Activated CD8-positive, alpha-beta T cell treated with anti-CD3 and anti-CD28 coated beads, Interleukin-2, amount 10 ng/mL, durations not matched to agents 7 days and 5 days (primary cell): ENCODE measurements at regions of chr14 and their contacts with region 1.

Region 1: DNA sequence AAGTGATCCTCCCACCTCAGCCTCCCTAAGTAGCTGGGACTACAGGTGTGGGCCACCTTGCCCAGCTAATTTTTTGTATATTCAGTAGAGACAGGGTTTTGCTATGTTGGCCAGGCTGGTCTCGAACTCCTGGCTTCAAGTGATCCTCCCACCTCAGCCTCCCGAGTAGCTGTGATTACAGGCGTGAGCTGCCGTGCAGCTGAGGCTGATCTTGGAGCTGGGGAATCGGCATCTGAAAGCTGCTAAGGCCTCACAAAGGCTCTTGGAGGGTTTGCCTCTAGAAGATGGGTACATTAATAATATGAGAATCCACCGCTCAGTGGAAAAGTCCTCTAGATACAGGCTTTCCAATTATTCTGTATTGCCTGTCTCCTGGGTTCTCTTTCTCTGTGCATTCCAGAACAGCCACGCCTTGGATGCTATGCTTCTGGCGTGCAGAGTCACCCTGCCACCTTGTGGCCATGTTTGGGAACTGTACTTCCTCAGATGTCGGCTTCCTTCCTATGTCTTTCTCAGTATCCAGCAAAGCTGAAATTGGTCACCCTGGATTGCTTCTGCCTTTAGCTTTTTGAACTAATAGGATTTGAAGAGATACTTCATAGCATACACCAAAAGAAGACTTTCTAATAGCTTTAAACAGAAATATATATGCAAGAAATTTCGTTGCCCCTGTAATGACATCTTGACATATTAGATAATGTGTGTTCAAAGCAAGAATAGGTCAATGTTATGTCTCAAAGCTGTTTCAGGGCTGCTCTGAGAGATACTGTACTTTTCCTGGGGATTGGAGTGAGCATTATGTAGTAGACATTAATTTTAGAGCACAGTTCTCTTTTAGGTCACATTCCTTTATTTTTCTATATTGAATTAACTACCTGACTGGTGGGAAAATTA is 75.4 kb downstream of the SNAPC1 start:
- DNase-seq: peak; percentile 84
- ATAC-seq: peak; percentile 96
- H3K4me3 Mint-ChIP-seq: no peak overlapping the region
- H3K27ac Mint-ChIP-seq: no peak overlapping the region
- H3K4me1 Mint-ChIP-seq: peaks cover 9% of the 10 kb centered on the region
- H3K27me3 Mint-ChIP-seq: peaks cover 25% of the 10 kb centered on the region

Region 2: DNA sequence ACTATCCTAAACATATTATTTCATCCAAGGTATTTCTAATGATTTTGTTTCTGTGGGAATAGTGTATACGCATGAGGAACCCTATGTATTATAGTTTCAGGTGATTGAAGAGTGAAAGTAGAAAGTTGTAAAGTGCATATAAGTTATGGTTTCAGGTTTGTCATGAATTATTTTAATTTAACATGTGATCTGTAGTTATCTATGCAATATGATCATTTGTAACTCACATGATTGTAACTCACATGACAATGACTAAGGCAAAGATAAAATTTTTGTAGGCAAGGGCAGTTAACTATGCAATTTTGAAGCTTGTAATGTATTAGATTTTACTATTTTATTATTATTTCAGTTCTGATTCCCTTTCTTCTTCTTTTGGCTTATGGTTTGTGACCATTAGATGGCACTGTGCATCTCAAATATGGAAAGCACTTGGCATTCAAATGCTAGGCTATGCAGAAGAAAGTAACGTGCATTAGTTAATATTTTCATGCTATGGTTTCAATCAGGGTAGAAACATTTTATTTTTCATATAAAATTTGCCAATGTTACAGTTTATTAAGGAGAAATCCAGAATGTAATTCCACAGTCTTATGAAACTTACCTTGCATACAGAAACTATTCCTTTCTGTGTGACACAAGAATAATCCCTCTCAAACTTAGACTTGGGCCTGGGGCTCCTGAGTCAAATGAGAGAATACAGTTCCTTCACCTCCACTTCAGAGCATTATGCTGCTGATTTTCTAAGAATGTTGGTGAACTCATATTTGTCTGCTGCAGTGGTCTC is 540.7 kb before region 1 on chr14:
- CTCF ChIA-PET with region 1: interaction called, 12 read pairs
- POLR2A ChIA-PET with region 1: no interaction called
- DNase-seq: peak; percentile 50
- ATAC-seq: peak; percentile 50
- H3K4me3 Mint-ChIP-seq: peak overlapping the region; percentile 53
- H3K27ac Mint-ChIP-seq: no peak overlapping the region
- H3K4me1 Mint-ChIP-seq: peaks cover 47% of the 10 kb centered on the region
- H3K27me3 Mint-ChIP-seq: no peaks in the 10 kb centered on the region

Region 3: DNA sequence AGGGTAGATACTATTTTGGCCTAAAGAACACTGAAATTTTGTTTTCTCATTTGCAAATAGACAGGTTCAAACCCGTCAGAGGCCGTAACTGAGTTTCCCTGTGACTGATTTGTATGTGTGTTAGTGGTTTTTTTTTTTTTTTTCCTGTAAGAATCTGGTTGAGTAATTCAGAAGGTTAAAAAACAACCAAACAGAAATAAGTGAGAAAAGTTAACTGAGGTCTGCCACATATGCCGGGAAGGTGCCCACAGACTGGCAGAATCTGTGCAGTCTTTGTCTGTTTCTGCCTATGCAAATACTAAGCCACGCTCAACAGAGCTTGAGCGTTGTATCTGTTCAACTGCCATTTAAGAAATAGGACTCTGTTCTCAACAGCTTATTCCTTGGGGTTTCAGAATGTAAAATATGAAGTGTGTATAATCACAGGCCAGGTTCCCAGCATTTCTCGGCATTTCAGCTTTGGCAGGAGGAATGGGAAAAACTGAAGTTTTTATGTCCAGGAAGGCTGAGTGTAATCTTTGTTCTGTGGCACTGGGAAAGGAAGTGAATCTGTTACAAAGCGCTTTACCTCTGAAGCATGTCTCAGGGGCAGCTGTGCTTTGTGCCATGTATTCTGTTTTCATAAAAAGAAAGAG is 334.3 kb before region 1 on chr14:
- CTCF ChIA-PET with region 1: interaction called, 17 read pairs
- POLR2A ChIA-PET with region 1: no interaction called
- DNase-seq: peak; percentile 66
- ATAC-seq: peak; percentile 82
- H3K4me3 Mint-ChIP-seq: peak overlapping the region; percentile 73
- H3K27ac Mint-ChIP-seq: peak overlapping the region; percentile 97
- H3K4me1 Mint-ChIP-seq: peaks cover 89% of the 10 kb centered on the region
- H3K27me3 Mint-ChIP-seq: no peaks in the 10 kb centered on the region

Region 4: DNA sequence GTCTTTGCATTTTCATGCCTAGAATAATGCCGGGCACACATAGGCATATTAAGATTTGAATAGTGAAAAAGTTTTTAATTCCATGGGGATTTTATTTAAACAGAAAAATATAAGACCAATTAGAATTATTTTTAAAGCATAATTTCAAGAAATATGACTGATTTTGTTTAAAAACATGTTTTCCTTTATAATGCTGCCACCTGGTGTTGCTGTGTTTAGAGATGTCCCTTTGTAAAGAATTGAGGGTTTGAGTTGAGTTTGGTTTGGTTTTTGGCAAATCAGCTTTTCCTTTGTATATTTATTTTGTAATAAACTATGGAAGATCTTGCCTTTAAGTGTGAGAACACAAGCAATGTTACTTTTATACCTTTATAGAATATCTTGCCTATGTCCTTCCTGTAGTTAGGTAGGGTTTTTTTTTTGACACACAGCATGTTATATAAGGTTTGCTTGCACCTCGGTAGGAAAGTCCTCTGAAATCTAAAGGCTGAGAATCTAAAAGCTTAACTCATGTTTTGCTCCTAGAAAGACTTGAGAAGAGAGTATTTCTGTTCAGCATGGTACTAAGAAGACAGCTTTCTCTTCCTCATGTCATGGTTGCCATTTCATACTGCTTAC is 106.7 kb before region 1 on chr14:
- CTCF ChIA-PET with region 1: interaction called, 14 read pairs
- POLR2A ChIA-PET with region 1: no interaction called
- DNase-seq: no peak
- ATAC-seq: no peak
- H3K4me3 Mint-ChIP-seq: no peak overlapping the region
- H3K27ac Mint-ChIP-seq: no peak overlapping the region
- H3K4me1 Mint-ChIP-seq: peaks cover 40% of the 10 kb centered on the region
- H3K27me3 Mint-ChIP-seq: no peaks in the 10 kb centered on the region

Region 5: DNA sequence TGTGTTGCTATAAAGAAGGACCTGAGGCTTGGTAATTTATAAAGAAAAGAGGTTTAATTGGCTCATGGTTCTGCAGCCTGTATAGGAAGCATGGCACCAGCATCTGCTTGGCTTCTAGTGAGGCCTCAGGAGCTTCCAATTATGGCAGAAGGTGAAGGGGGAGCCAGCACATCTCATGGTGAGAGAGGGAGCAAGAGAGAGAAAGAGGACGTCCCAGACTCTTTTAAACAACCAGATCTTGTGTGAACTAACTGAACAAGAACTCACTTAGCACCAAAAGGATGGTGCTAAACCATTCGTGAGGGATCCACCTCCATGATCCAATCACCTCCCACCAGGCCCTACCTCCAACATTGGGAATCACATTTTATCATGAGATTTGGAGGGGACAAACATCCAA is 81.4 kb before region 1 on chr14:
- CTCF ChIA-PET with region 1: interaction called, 62 read pairs
- POLR2A ChIA-PET with region 1: no interaction called
- DNase-seq: no peak
- ATAC-seq: no peak
- H3K4me3 Mint-ChIP-seq: no peak overlapping the region
- H3K27ac Mint-ChIP-seq: no peak overlapping the region
- H3K4me1 Mint-ChIP-seq: peaks cover 24% of the 10 kb centered on the region
- H3K27me3 Mint-ChIP-seq: peaks cover 5% of the 10 kb centered on the region

Region 6: GRCh38 chr14:61803755-61804154 is 33.8 kb before region 1 on chr14:
- CTCF ChIA-PET with region 1: interaction called, 14 read pairs
- POLR2A ChIA-PET with region 1: no interaction called
- DNase-seq: no peak
- ATAC-seq: no peak
- H3K4me3 Mint-ChIP-seq: no peak overlapping the region
- H3K27ac Mint-ChIP-seq: no peak overlapping the region
- H3K4me1 Mint-ChIP-seq: peaks cover 6% of the 10 kb centered on the region
- H3K27me3 Mint-ChIP-seq: peaks cover 10% of the 10 kb centered on the region

Region 7: GRCh38 chr14:62126879-62127478 is 289.4 kb after region 1 on chr14:
- CTCF ChIA-PET with region 1: interaction called, 20 read pairs
- POLR2A ChIA-PET with region 1: no interaction called
- DNase-seq: peak; percentile 23
- ATAC-seq: peak; percentile 65
- H3K4me3 Mint-ChIP-seq: no peak overlapping the region
- H3K27ac Mint-ChIP-seq: no peak overlapping the region
- H3K4me1 Mint-ChIP-seq: no peaks in the 10 kb centered on the region
- H3K27me3 Mint-ChIP-seq: peaks cover 46% of the 10 kb centered on the region